Vagina (tissue), 2 donors: ENCODE measurements at regions of chr20 and their contacts with region 1.

Region 1: DNA sequence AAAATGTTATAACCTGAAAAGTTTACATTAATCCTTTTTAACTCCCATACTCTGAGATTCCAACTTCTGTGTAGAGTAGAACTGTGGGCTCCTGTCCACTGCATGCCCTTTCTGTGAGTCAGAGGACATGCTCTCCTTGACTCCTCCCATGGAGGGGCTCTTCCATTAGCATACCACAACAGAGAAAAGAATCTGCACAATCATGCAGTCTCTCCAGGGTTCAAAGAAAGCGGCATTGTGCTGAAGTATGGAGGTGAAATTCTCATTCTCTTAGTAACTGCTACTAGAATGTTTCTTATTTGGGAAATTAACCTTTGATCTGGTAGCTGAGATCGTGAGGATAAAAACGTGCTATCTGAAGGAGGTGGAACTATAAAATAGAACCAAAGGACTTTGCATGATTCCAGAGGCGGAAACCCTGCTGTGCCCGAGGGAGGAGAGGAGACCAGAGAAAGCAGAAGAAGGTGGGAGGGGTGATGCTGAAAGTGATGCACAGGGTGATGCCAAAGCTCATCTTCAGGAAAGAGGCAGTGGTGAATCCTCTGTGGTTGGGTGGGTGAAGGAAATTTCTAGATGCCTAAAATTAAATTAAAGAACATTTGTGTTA is 202.2 kb upstream of the PCSK2 start:
- DNase-seq: no peak
- H3K4me3 ChIP-seq: no peak overlapping the region
- H3K27ac ChIP-seq: no peak overlapping the region
- H3K4me1 ChIP-seq: no peaks in the 10 kb centered on the region
- H3K27me3 ChIP-seq: no peaks in the 10 kb centered on the region
- CTCF ChIP-seq: no peak
- POLR2A ChIP-seq: no peak

Region 2: DNA sequence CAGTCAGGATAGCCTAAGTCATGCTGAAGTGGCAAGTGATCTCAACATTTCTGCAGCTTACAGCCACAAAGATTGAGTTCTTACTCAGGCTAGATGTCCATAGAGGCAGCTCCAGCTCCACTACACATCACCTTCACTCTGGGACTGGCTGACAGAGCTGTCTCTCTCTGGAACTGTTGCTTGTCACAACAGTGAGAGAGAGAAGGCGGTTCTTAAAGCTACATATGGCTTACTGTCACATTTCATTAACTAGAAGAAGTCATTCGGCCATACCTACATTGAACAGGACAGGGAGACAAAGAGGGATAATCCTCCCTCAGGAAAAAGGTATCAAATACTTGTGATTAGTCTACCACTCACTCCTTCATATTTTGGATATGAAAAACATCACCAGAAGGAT is 1772.3 kb before region 1 on chr20:
- intact Hi-C with region 1: loop called (anchors 5 kb)
- DNase-seq: no peak
- H3K4me3 ChIP-seq: no peak overlapping the region
- H3K27ac ChIP-seq: no peak overlapping the region
- H3K4me1 ChIP-seq: no peaks in the 10 kb centered on the region
- H3K27me3 ChIP-seq: no peaks in the 10 kb centered on the region
- CTCF ChIP-seq: no peak
- POLR2A ChIP-seq: no peak

Region 3: GRCh38 chr20:17137692-17138091 is 113.1 kb after region 1 on chr20:
- intact Hi-C with region 1: no loop called
- DNase-seq: no peak
- H3K4me3 ChIP-seq: no peak overlapping the region
- H3K27ac ChIP-seq: no peak overlapping the region
- H3K4me1 ChIP-seq: no peaks in the 10 kb centered on the region
- H3K27me3 ChIP-seq: no peaks in the 10 kb centered on the region
- CTCF ChIP-seq: no peak
- POLR2A ChIP-seq: no peak

Region 4: DNA sequence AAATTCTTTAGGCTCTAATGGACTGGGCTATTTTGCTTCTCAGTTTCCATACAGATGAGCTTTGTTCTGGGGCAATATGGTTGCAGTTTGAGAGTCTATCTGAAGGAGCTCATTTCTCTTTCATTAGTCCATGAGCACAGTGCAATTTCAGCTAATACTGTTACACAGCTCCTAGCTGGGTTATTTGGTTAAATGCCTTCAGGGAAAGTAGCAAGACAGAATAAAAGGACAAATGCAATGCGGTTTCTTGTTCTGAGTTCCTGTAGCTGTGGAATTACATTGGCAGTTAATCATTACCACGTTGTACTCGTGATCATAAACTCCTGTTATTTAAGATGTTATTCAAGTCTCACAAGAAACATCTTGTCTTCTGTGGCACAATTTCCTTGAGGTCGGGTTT is 378.8 kb after region 1 on chr20:
- intact Hi-C with region 1: no loop called
- DNase-seq: no peak
- H3K4me3 ChIP-seq: no peak overlapping the region
- H3K27ac ChIP-seq: no peak overlapping the region
- H3K4me1 ChIP-seq: peaks cover 15% of the 10 kb centered on the region
- H3K27me3 ChIP-seq: no peaks in the 10 kb centered on the region
- CTCF ChIP-seq: no peak
- POLR2A ChIP-seq: no peak

Region 5: DNA sequence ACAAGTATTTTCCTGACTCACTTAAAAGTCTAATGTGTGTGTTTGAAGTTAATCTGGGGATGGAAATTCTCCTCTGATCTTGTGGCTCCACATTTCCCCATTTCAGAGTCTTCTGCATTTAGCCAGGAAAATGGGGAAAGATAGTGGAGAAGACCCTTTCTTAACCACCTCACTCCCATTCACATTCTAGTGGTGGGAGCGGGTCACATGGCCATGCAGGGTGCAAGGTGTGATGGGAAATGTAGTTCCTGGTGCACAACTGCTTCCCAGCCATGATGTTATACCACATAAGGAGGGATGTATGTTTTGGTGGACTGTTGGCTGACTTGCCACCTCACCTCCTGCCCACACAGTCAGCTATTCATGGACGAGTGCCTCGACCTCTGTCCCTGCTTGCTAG is 737.0 kb after region 1 on chr20:
- intact Hi-C with region 1: no loop called
- DNase-seq: no peak
- H3K4me3 ChIP-seq: no peak overlapping the region
- H3K27ac ChIP-seq: no peak overlapping the region
- H3K4me1 ChIP-seq: no peaks in the 10 kb centered on the region
- H3K27me3 ChIP-seq: no peaks in the 10 kb centered on the region
- CTCF ChIP-seq: no peak
- POLR2A ChIP-seq: no peak

Region 6: DNA sequence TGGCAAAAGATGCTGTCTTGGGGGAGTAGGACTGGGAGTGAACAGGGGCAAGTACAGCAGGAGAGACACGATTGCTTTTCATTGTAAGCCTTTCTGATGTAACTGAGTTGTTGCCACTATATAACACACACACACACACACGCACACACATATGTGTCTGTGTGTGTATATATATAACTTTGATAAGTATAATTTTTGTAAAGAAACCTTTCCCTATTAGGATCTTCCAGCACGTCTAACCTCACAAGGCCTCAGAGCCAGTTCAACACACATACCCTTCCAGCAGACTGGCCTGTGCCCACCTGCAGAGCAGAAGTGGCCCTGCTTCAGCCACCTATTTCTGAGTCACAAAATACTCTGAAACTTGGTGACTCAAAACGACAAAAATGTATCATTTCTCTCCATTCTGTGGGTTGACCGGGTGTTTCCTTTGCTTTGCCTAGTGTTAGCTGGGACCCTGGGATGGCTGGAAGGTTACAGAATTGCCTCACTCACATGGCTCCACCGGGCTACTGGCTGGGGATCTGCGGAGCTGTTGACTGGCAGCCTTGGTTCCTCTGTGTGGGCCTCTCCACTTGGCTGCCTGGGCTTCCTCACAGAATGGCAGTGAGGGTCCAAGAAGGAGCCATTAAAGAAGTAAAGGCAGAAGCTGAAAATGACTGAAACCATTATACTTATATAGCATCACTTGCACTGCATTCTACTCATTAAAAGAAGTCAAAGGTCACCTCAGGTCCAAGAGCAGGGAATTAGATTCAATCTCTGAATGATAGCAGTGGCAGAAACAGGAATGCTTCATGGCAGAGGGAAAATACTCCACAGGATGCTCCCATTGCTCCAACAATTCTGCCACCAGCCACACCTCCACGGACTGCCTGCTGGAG is 801.6 kb after region 1 on chr20:
- intact Hi-C with region 1: no loop called
- DNase-seq: no peak
- H3K4me3 ChIP-seq: no peak overlapping the region
- H3K27ac ChIP-seq: no peak overlapping the region
- H3K4me1 ChIP-seq: peaks cover 11% of the 10 kb centered on the region
- H3K27me3 ChIP-seq: no peaks in the 10 kb centered on the region
- CTCF ChIP-seq: no peak
- POLR2A ChIP-seq: no peak